CD8-positive, alpha-beta T cell (primary cell): ENCODE measurements at regions of chr6 and their contacts with region 1.

Region 1: GRCh38 chr6:32568561-32568960 is 21.1 kb downstream of the HLA-DRB1 start:
- DNase-seq: no peak
- ATAC-seq: peak; percentile 71
- H3K4me3 ChIP-seq: no peak overlapping the region
- H3K4me3 Mint-ChIP-seq: peak overlapping the region; percentile 65
- H3K27ac ChIP-seq: no peak overlapping the region
- H3K27ac Mint-ChIP-seq: peak overlapping the region; percentile 84
- H3K4me1 ChIP-seq: no peaks in the 10 kb centered on the region
- H3K4me1 Mint-ChIP-seq: peaks cover 12% of the 10 kb centered on the region
- H3K27me3 ChIP-seq: no peaks in the 10 kb centered on the region
- H3K27me3 Mint-ChIP-seq: peaks cover 2% of the 10 kb centered on the region
- CTCF ChIP-seq: no peak

Region 2: DNA sequence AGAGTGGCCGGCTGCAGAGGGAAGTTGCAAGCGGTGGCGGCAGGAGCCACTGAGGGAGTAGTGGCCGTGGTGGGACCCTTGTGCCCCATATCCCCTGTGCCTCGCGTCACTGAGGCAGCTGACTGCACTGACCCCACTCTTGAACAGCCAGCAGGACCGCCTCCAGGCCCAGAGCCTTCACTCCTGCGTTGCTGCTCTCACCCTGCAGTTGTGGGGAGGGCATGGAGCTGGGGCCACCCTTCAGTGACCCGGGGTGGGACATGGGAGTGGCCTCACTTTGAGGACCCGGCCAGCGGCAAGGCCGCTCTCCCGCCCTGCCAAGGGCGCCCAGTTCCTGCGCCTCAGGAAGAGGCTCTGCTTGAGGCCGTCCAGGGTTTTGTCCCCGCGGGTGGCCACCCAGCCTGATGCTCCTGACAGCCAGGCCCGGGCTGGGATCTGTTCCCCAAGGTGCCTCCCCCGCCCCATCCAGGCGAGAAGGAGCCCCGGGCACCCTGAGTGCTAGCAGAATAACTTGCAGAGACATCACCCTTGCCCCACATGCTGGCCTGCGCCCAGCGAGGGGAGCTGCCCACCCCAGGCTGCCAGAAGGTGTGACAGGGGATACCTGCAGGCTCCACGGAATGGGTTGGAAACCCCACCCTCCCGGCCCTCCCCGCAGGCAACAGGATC is 84.5 kb before region 1 on chr6:
- CTCF ChIA-PET with region 1: no interaction called
- POLR2A ChIA-PET with region 1: no interaction called
- intact Hi-C with region 1: loop called in 1 of 2 experiments (anchors 2 kb)
- DNase-seq: no peak
- ATAC-seq: no peak
- H3K4me3 ChIP-seq: no peak overlapping the region
- H3K4me3 Mint-ChIP-seq: no peak overlapping the region
- H3K27ac ChIP-seq: no peak overlapping the region
- H3K27ac Mint-ChIP-seq: no peak overlapping the region
- H3K4me1 ChIP-seq: no peaks in the 10 kb centered on the region
- H3K4me1 Mint-ChIP-seq: no peaks in the 10 kb centered on the region
- H3K27me3 ChIP-seq: no peaks in the 10 kb centered on the region
- H3K27me3 Mint-ChIP-seq: peaks cover 15% of the 10 kb centered on the region
- CTCF ChIP-seq: no peak

Region 3: GRCh38 chr6:32529697-32530429 is 38.7 kb before region 1 on chr6 and contains the start of gene HLA-DRB5:
- CTCF ChIA-PET with region 1: no interaction called
- POLR2A ChIA-PET with region 1: no interaction called
- intact Hi-C with region 1: loop called in 1 of 2 experiments (anchors 2 kb)
- DNase-seq: peak in 3 of 9 experiments; percentile 4 to 61 (median 51)
- ATAC-seq: peak; percentile 66
- H3K4me3 ChIP-seq: peak within 1 kb of the TSS in 1 of 2 experiments; percentile 50
- H3K4me3 Mint-ChIP-seq: peak within 1 kb of the TSS; percentile 78
- H3K27ac ChIP-seq: peak within 1 kb of the TSS in 1 of 2 experiments; percentile 56
- H3K27ac Mint-ChIP-seq: peak within 1 kb of the TSS; percentile 32
- H3K4me1 ChIP-seq: no peaks in the 10 kb centered on the region
- H3K4me1 Mint-ChIP-seq: peaks cover 5% of the 10 kb centered on the region
- H3K27me3 ChIP-seq: no peaks in the 10 kb centered on the region
- H3K27me3 Mint-ChIP-seq: peaks cover 4% of the 10 kb centered on the region
- CTCF ChIP-seq: no peak
- total RNA-seq, gene HLA-DRB5: 9.3 to 10.1 TPM